Activated CD4-positive, alpha-beta memory T cell treated with anti-CD3 and anti-CD28 coated beads for 36 hours (primary cell): ENCODE measurements at regions of chr14 and their contacts with region 1.

Region 1: DNA sequence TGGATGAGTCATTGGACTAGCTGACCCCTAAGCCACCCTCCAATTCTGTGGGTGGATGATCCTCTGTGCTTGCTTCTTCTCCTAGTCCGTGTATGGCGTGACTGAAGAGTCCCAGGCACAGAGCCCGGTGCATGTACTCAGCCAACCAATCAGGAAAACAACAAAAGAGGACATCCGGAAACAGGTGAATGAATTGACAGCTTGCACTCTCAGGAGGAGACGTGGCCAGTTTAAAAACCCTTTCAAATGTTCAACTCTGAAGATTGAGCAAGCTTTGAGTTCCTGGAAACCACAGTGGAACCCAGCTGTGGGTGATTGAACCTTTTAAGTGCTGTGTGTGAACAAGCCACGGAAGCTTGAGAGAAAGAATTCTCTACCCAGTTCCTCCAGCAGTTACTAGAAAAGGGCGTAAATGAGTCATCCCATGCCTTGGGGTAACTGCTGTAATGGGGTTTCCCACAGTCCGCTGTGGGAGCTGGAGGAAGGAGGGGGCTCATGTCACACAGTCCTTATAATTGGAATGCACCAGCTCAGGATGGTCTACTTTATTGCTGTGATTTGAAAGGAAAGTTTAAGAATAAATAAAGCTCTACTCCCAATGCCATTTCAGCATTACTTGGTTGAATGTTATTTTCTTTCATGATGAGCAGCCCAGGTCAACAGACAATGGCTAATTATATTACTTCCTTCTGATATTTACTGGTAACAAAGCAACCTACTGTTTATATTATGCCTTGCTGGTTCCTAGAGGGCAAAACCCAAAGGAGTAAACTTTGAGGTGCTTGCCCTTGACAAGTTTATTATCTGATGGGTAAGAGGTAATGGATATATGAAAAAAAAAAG is 417.0 kb downstream of the DPF3 start:
- DNase-seq: peak; percentile 86
- H3K4me3 Mint-ChIP-seq: peak overlapping the region; percentile 54
- H3K27ac Mint-ChIP-seq: peak overlapping the region; percentile 84
- H3K4me1 Mint-ChIP-seq: peaks cover 32% of the 10 kb centered on the region
- H3K27me3 Mint-ChIP-seq: peaks cover 3% of the 10 kb centered on the region

Region 2: DNA sequence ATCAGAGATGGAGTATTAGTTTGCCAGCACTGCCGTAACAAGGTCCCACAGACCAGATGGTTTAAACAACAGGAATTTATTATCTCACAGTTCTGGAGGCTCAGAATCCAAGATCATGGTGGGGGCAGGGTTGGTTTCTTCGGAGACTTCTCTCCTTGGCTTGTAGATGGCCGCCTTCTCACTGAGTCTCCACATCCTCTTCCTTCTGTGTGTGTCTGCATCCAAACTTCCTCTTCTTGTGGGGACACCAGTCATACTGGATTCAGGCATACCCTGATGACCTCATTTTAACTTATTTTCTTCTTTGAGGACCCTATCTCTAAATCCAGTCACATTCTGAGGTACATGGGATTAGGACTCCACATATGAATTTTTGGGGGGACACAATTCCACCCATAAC is 89.2 kb before region 1 on chr14:
- CTCF ChIA-PET with region 1: no interaction called
- POLR2A ChIA-PET with region 1: no interaction called
- intact Hi-C with region 1: no loop called
- DNase-seq: no peak
- H3K4me3 Mint-ChIP-seq: no peak overlapping the region
- H3K27ac Mint-ChIP-seq: no peak overlapping the region
- H3K4me1 Mint-ChIP-seq: no peaks in the 10 kb centered on the region
- H3K27me3 Mint-ChIP-seq: peaks cover 6% of the 10 kb centered on the region

Region 3: DNA sequence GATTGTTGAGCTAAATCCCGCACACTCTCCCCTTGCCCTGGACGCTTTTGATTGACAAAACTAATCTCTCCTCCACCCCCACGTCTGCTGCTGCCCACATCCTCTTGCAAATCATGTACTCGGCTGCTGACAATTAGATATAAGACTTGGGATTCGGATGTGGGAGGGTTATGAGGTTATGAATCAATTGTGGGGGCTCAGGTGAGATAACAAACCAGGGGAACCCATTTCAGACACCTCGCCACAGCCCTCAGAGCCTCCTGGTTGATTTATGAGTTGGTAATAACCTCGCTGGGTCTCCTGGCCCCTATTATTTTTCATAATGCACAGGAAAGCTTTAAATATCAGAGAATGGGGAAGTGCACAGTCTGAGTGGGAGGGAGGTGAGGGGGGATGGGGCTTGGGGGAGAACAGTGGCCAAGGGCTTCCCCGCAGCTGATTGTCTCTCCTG is 32.9 kb before region 1 on chr14:
- CTCF ChIA-PET with region 1: interaction called, 4 read pairs
- POLR2A ChIA-PET with region 1: interaction called, 3 read pairs
- intact Hi-C with region 1: loop called (anchors 5 kb)
- DNase-seq: peak; percentile 74
- H3K4me3 Mint-ChIP-seq: no peak overlapping the region
- H3K27ac Mint-ChIP-seq: peak overlapping the region; percentile 30
- H3K4me1 Mint-ChIP-seq: peaks cover 39% of the 10 kb centered on the region
- H3K27me3 Mint-ChIP-seq: no peaks in the 10 kb centered on the region

Region 4: GRCh38 chr14:72451054-72451972 is 25.6 kb before region 1 on chr14:
- CTCF ChIA-PET with region 1: interaction called, 5 read pairs
- POLR2A ChIA-PET with region 1: interaction called, 9 read pairs
- intact Hi-C with region 1: loop called (anchors 1 kb)
- DNase-seq: peak; percentile 72
- H3K4me3 Mint-ChIP-seq: no peak overlapping the region
- H3K27ac Mint-ChIP-seq: peak overlapping the region; percentile 72
- H3K4me1 Mint-ChIP-seq: peaks cover 28% of the 10 kb centered on the region
- H3K27me3 Mint-ChIP-seq: peaks cover 4% of the 10 kb centered on the region

Region 5: GRCh38 chr14:72463291-72463866 is 13.5 kb before region 1 on chr14:
- CTCF ChIA-PET with region 1: no interaction called
- POLR2A ChIA-PET with region 1: no interaction called
- intact Hi-C with region 1: no loop called
- DNase-seq: no peak
- H3K4me3 Mint-ChIP-seq: no peak overlapping the region
- H3K27ac Mint-ChIP-seq: no peak overlapping the region
- H3K4me1 Mint-ChIP-seq: no peaks in the 10 kb centered on the region
- H3K27me3 Mint-ChIP-seq: no peaks in the 10 kb centered on the region

Region 6: DNA sequence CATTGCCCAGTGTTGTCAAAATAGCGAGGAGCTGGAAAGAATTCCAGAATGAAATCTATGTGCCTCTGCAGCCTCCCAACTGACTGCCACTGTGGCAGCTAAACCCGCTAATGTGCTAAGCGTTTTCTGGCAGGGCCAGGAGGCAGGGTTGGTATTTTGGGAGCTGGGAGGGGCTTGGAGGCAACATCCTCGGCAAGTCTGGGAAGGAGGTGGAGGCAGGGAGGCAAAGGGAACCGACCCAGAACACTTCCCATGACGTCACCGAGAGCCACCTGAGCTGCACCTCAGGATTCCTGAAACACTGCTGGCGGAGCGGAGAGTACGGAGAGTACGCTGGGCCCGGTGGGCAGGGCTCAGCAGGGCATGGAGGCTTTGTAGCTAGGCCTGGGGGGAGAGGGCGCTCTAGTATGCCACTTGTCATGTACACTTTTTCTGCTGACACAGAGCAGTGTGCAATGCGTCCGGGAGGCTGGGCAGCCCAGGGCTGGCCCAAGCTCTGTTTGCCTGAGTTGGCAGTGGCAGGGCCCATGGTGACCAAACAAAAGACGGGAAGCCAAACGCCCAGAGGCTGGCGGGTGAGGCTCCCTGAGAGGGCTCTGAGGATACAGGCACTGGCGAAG is 335.5 kb after region 1 on chr14:
- CTCF ChIA-PET with region 1: no interaction called
- POLR2A ChIA-PET with region 1: no interaction called
- intact Hi-C with region 1: loop called (anchors 2 kb)
- DNase-seq: no peak
- H3K4me3 Mint-ChIP-seq: no peak overlapping the region
- H3K27ac Mint-ChIP-seq: no peak overlapping the region
- H3K4me1 Mint-ChIP-seq: peaks cover 36% of the 10 kb centered on the region
- H3K27me3 Mint-ChIP-seq: no peaks in the 10 kb centered on the region